ENCODE measurements at regions of chr15 and their contacts with region 1.

Region 1: GRCh38 chr15:63891079-63891767 is 57.5 kb upstream of the HERC1 start:
- DNase-seq: peak; percentile 60
- H3K4me3 ChIP-seq: no peak overlapping the region
- H3K27ac ChIP-seq: no peak overlapping the region
- H3K4me1 ChIP-seq: peaks cover 2% of the 10 kb centered on the region
- H3K27me3 ChIP-seq: no peaks in the 10 kb centered on the region
- CTCF ChIP-seq: peak; percentile 74 to 86

Region 2: GRCh38 chr15:63610200-63610841 is 280.9 kb before region 1 on chr15:
- CTCF ChIA-PET with region 1: no interaction called
- dilution Hi-C with region 1: no loop called
- in situ Hi-C with region 1: no loop called
- intact Hi-C with region 1: loop called (anchors 1 kb)
- DNase-seq: peak; percentile 67
- H3K4me3 ChIP-seq: no peak overlapping the region
- H3K27ac ChIP-seq: no peak overlapping the region
- H3K4me1 ChIP-seq: peaks cover under 1% of the 10 kb centered on the region
- H3K27me3 ChIP-seq: no peaks in the 10 kb centered on the region
- CTCF ChIP-seq: peak; percentile 81 to 85